ENCODE measurements at regions of chr18 and their contacts with region 1.

Region 1: DNA sequence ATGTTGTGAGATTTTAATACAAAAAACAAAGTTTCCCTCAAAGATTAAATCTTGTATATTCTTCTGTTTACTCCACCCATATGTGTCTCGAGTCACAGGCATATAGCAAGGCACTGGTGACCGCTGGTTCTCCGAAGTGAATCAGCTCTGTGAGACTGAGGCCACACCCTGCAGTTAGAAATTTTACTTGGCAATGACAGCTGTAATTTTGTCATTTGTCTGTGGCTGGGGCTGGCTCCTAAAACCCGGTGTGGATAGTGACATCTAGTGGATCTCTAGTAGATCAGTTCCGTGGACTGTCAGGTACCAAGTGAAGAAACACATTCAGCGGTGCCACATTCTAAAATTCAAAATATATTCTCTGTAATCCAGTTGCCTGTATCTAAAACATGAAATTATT is 278.0 kb downstream of the NEDD4L start:
- DNase-seq: peak; percentile 95
- ATAC-seq: peak; percentile 99
- H3K4me3 ChIP-seq: no peak overlapping the region
- H3K27ac ChIP-seq: peak overlapping the region; percentile 63
- H3K4me1 ChIP-seq: peaks cover 11% of the 10 kb centered on the region
- H3K27me3 ChIP-seq: no peaks in the 10 kb centered on the region
- CTCF ChIP-seq: peak; percentile 76

Region 2: DNA sequence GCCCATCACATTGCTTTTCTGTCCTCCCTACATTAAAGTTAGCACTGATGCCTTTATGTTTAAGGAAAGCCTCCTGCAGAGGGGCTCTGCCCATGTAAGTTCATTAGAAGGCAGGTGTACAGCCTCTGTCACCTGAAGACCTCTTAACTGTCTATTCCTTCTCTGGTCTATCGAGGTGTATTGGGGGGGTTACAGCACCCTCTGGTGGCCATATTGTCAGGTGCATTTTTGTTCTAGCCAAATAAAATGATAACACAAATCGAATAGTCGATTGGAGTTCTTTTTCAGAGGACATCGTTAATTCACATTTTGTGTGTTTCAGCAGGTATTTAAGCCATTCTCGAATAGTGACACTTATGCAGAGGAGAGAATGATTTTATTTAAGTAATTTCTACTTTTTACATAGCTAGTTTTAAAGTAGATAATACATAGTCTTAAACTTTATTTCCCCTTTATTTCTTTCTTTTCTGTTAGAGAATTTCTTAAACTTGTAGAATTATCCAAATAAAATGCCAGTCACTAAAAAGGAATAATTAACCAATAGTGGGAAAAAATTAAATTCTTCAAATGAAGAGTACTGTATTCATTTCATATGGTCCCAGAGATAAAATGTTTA is 141.1 kb before region 1 on chr18:
- CTCF ChIA-PET with region 1: interaction called, 14 read pairs
- POLR2A ChIA-PET with region 1: no interaction called
- intact Hi-C with region 1: loop called (anchors 2 kb)
- DNase-seq: peak; percentile 72
- ATAC-seq: no peak
- H3K4me3 ChIP-seq: no peak overlapping the region
- H3K27ac ChIP-seq: no peak overlapping the region
- H3K4me1 ChIP-seq: peaks cover 38% of the 10 kb centered on the region
- H3K27me3 ChIP-seq: no peaks in the 10 kb centered on the region
- CTCF ChIP-seq: peak; percentile 94

Region 3: GRCh38 chr18:58230438-58231179 is 91.4 kb before region 1 on chr18:
- CTCF ChIA-PET with region 1: no interaction called
- POLR2A ChIA-PET with region 1: no interaction called
- intact Hi-C with region 1: no loop called
- DNase-seq: peak; percentile 47
- ATAC-seq: no peak
- H3K4me3 ChIP-seq: no peak overlapping the region
- H3K27ac ChIP-seq: no peak overlapping the region
- H3K4me1 ChIP-seq: peaks cover 35% of the 10 kb centered on the region
- H3K27me3 ChIP-seq: no peaks in the 10 kb centered on the region
- CTCF ChIP-seq: no peak

Region 4: GRCh38 chr18:58257461-58257860 is 64.5 kb before region 1 on chr18:
- CTCF ChIA-PET with region 1: interaction called, 4 read pairs
- POLR2A ChIA-PET with region 1: no interaction called
- intact Hi-C with region 1: loop called (anchors 2 kb)
- DNase-seq: peak; percentile 18
- ATAC-seq: no peak
- H3K4me3 ChIP-seq: no peak overlapping the region
- H3K27ac ChIP-seq: no peak overlapping the region
- H3K4me1 ChIP-seq: peaks cover 36% of the 10 kb centered on the region
- H3K27me3 ChIP-seq: no peaks in the 10 kb centered on the region
- CTCF ChIP-seq: no peak

Region 5: GRCh38 chr18:58263055-58263957 is 58.7 kb before region 1 on chr18:
- CTCF ChIA-PET with region 1: interaction called, 3 read pairs
- POLR2A ChIA-PET with region 1: no interaction called
- intact Hi-C with region 1: loop called (anchors 2 kb)
- DNase-seq: peak; percentile 85
- ATAC-seq: peak; percentile 87
- H3K4me3 ChIP-seq: peak overlapping the region; percentile 56
- H3K27ac ChIP-seq: peak overlapping the region; percentile 85
- H3K4me1 ChIP-seq: peaks cover 54% of the 10 kb centered on the region
- H3K27me3 ChIP-seq: no peaks in the 10 kb centered on the region
- CTCF ChIP-seq: no peak